ENCODE measurements at regions of chr22 and their contacts with region 1.

Region 1: GRCh38 chr22:46006379-46007002 is 29.5 kb upstream of the WNT7B start:
- DNase-seq: peak; percentile 71 to 93 (median 84)
- ATAC-seq: peak; percentile 94 to 98
- H3K4me3 Mint-ChIP-seq: peak overlapping the region in 5 of 10 donors; percentile 19 to 64 (median 27)
- H3K27ac Mint-ChIP-seq: peak overlapping the region in 5 of 10 donors; percentile 8 to 83 (median 49)
- H3K4me1 Mint-ChIP-seq: peaks cover 5 to 17% (median 16%) of the 10 kb centered on the region in 4 donors
- H3K27me3 Mint-ChIP-seq: no peaks in the 10 kb centered on the region

Region 2: GRCh38 chr22:45948081-45948648 is 58.3 kb before region 1 on chr22:
- POLR2A ChIA-PET with region 1: no interaction called
- DNase-seq: no peak
- ATAC-seq: peak in 1 of 2 donors; percentile 33
- H3K4me3 Mint-ChIP-seq: no peak overlapping the region
- H3K27ac Mint-ChIP-seq: no peak overlapping the region
- H3K4me1 Mint-ChIP-seq: peaks cover 0 to 7% (median 5%) of the 10 kb centered on the region in 4 donors
- H3K27me3 Mint-ChIP-seq: peaks cover 4 to 32% (median 14%) of the 10 kb centered on the region in 5 donors

Region 3: DNA sequence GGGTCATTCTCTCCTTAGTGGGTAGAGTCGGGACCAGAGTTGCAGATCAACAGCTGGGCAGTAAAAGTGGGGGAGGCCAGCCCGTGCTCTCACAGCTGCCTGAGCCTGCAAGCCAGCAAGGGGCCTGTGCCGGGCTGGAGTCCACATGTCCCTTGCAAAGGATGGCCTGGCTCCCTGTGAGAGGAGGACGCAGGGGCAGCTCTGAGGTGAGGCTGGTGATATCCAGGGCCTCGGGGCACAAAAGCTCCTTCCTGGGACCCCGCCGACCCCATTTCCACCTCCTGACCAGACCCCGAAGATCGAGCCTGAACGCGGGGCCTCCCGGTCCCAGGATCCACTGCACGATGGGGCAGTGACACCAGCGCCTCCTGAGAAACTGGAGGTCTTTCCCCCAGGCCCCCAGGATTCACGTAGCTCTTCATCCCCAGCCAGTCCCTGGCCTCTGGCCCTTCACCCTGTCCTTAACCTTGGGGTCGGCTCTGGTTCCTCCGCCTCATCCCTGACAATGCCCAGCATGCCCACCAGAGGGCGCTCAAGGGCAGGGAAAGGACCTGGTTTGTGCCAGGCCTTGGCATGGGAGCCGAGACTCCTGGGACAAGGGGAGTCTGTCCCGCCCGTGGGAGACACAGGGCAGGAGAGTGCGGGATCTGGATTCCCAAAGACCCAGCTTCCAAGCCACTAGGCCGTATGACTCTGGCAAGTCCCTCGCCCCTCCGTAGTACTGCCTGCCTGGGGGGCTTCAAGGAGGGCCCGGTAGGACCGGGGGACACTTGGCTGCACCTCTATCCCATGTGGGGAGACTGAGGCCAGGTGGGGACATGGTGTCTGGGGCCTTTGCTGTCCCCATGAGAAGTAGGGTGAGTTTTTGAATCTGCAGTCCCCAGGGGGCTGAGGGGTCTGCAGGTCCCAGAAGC is 11.7 kb before region 1 on chr22:
- POLR2A ChIA-PET with region 1: interaction called, 12 read pairs
- DNase-seq: peak; percentile 55 to 86 (median 78)
- ATAC-seq: peak; percentile 75 to 87
- H3K4me3 Mint-ChIP-seq: peak overlapping the region in 2 of 10 donors; percentile 5 to 54
- H3K27ac Mint-ChIP-seq: peak overlapping the region in 2 of 10 donors; percentile 50 to 64
- H3K4me1 Mint-ChIP-seq: peaks cover 6 to 21% (median 10%) of the 10 kb centered on the region in 4 donors
- H3K27me3 Mint-ChIP-seq: peaks cover 0 to 3% (median 0%) of the 10 kb centered on the region in 5 donors

Region 4: GRCh38 chr22:46071451-46072109 is 65.1 kb after region 1 on chr22:
- POLR2A ChIA-PET with region 1: no interaction called
- DNase-seq: peak in 8 of 10 donors; percentile 33 to 80 (median 43)
- ATAC-seq: peak; percentile 33 to 34
- H3K4me3 Mint-ChIP-seq: peak overlapping the region; percentile 73 to 89 (median 82)
- H3K27ac Mint-ChIP-seq: peak overlapping the region in 3 of 10 donors; percentile 74 to 84 (median 77)
- H3K4me1 Mint-ChIP-seq: peaks cover 21 to 67% (median 56%) of the 10 kb centered on the region in 4 donors
- H3K27me3 Mint-ChIP-seq: no peaks in the 10 kb centered on the region

Region 5: GRCh38 chr22:46116491-46116958 is 110.0 kb after region 1 on chr22:
- POLR2A ChIA-PET with region 1: interaction called, 15 read pairs
- DNase-seq: peak; percentile 73 to 93 (median 83)
- ATAC-seq: peak; percentile 96 to 98
- H3K4me3 Mint-ChIP-seq: no peak overlapping the region
- H3K27ac Mint-ChIP-seq: peak overlapping the region in 1 of 10 donors; percentile 50
- H3K4me1 Mint-ChIP-seq: peaks cover 0 to 5% (median 2%) of the 10 kb centered on the region in 4 donors
- H3K27me3 Mint-ChIP-seq: no peaks in the 10 kb centered on the region